ENCODE measurements at regions of chr3 and their contacts with region 1.

Region 1: DNA sequence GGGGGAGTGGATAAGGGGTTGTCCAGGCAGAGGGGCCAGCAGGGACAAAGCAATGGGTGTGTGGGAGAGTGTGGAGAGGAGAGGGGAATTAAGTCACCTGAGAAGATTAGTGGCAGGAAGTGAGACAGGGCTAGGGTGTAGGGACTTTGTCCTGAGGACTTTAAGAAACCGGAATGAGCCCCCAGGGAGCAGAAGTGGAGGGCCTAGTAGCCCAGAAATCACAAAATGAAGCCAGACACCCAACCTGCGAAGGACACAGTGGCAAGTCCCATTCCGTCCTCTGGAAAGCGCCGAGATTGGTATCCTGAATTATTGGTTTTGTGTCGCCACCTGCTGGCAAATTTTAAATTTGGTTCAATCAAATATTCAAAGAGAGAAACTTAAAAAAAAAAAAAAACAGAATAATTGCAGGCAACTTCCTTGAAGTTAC is 78.0 kb upstream of the SLC25A36 start:
- DNase-seq: no peak
- ATAC-seq: no peak
- H3K4me3 ChIP-seq: no peak overlapping the region
- H3K27ac ChIP-seq: no peak overlapping the region
- H3K4me1 ChIP-seq: no peaks in the 10 kb centered on the region
- H3K27me3 ChIP-seq: no peaks in the 10 kb centered on the region

Region 2: GRCh38 chr3:139427283-139427993 is 1436.2 kb before region 1 on chr3:
- intact Hi-C with region 1: loop called in 1 of 2 experiments (anchors 10 kb)
- DNase-seq: no peak
- ATAC-seq: peak; percentile 86
- H3K4me3 ChIP-seq: no peak overlapping the region
- H3K27ac ChIP-seq: no peak overlapping the region
- H3K4me1 ChIP-seq: no peaks in the 10 kb centered on the region
- H3K27me3 ChIP-seq: no peaks in the 10 kb centered on the region

Region 3: GRCh38 chr3:140922634-140923033 is 59.0 kb after region 1 on chr3:
- intact Hi-C with region 1: no loop called
- DNase-seq: no peak
- ATAC-seq: no peak
- H3K4me3 ChIP-seq: no peak overlapping the region
- H3K27ac ChIP-seq: no peak overlapping the region
- H3K4me1 ChIP-seq: no peaks in the 10 kb centered on the region
- H3K27me3 ChIP-seq: no peaks in the 10 kb centered on the region

Region 4: GRCh38 chr3:141039589-141039988 is 176.0 kb after region 1 on chr3:
- intact Hi-C with region 1: no loop called
- DNase-seq: no peak
- ATAC-seq: no peak
- H3K4me3 ChIP-seq: no peak overlapping the region
- H3K27ac ChIP-seq: no peak overlapping the region
- H3K4me1 ChIP-seq: no peaks in the 10 kb centered on the region
- H3K27me3 ChIP-seq: peaks cover 0 to 2% of the 10 kb centered on the region in 2 donors